Mammary epithelial cell (primary cell): ENCODE measurements at regions of chr10 and their contacts with region 1.

Region 1: DNA sequence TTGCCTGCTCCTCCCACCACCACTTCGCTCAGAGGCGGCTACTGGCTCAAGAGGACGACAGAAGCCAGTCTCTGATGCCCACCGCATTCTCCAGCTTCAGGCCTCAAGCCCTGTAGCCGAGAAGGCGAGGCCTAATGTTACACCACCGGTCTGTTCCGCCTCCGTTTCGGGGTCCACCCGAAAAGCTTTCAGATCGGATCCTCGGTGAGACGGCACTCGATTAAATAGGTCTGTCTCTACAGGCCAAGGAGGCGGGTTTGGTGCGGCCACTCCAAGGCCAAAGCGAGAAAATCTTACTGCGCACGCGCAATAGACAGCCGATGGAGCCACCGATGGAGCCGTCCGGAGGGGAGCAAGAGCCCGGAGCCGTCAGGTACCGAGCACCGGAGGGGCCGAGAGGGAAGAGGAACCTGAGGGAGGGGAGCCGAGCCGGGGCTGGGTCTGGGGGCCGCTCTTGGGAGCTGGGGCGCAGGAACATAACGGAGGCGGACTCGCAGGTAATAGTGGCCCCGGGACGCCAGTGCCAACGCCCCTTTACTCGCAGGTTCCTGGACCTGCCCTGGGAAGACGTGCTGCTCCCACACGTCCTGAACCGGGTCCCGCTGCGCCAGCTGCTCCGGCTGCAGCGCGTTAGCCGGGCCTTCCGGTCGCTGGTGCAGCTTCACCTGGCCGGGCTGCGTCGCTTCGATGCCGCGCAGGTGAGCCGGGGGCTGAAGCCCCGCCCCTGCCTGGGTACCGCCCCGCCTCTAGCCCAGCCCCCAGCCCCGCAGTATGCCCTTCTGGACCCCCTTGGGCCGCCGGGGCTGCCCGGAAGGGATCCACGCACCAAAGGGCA is at the start of gene FBXL15:
- DNase-seq: peak; percentile 96
- H3K4me3 ChIP-seq: peak within 1 kb of the TSS; percentile 72 to 88 (median 74)
- H3K27ac ChIP-seq: peak within 1 kb of the TSS; percentile 56
- H3K4me1 ChIP-seq: peaks cover 38% of the 10 kb centered on the region
- H3K27me3 ChIP-seq: no peaks in the 10 kb centered on the region
- CTCF ChIP-seq: no peak
- total RNA-seq, gene FBXL15: 5.0 to 7.0 TPM

Region 2: GRCh38 chr10:102394079-102394800 is 26.8 kb before region 1 on chr10:
- CTCF ChIA-PET with region 1: interaction called, 4 read pairs
- dilution Hi-C with region 1: no loop called
- in situ Hi-C with region 1: no loop called
- intact Hi-C with region 1: loop called (anchors 1 kb)
- DNase-seq: peak; percentile 98
- H3K4me3 ChIP-seq: peak overlapping the region; percentile 74 to 77 (median 76)
- H3K27ac ChIP-seq: peak overlapping the region; percentile 89
- H3K4me1 ChIP-seq: peaks cover 18% of the 10 kb centered on the region
- H3K27me3 ChIP-seq: no peaks in the 10 kb centered on the region
- CTCF ChIP-seq: no peak

Region 3: GRCh38 chr10:102432162-102432950 is 11.3 kb after region 1 on chr10 and contains the start of gene CUEDC2:
- CTCF ChIA-PET with region 1: no interaction called
- dilution Hi-C with region 1: no loop called
- in situ Hi-C with region 1: no loop called
- intact Hi-C with region 1: loop called (anchors 1 kb)
- DNase-seq: peak; percentile 94
- H3K4me3 ChIP-seq: peak within 1 kb of the TSS; percentile 42 to 97 (median 80)
- H3K27ac ChIP-seq: peak within 1 kb of the TSS; percentile 47
- H3K4me1 ChIP-seq: no peaks in the 10 kb centered on the region
- H3K27me3 ChIP-seq: no peaks in the 10 kb centered on the region
- CTCF ChIP-seq: no peak
- total RNA-seq, gene CUEDC2: 32.0 to 49.5 TPM

Region 4: GRCh38 chr10:102461187-102462054 is 40.4 kb after region 1 on chr10:
- CTCF ChIA-PET with region 1: no interaction called
- dilution Hi-C with region 1: no loop called
- in situ Hi-C with region 1: no loop called
- intact Hi-C with region 1: loop called (anchors 5 kb)
- DNase-seq: peak; percentile 88
- H3K4me3 ChIP-seq: peak overlapping the region; percentile 43 to 56 (median 54)
- H3K27ac ChIP-seq: peak overlapping the region; percentile 9
- H3K4me1 ChIP-seq: peaks cover 11% of the 10 kb centered on the region
- H3K27me3 ChIP-seq: no peaks in the 10 kb centered on the region
- CTCF ChIP-seq: no peak

Region 5: DNA sequence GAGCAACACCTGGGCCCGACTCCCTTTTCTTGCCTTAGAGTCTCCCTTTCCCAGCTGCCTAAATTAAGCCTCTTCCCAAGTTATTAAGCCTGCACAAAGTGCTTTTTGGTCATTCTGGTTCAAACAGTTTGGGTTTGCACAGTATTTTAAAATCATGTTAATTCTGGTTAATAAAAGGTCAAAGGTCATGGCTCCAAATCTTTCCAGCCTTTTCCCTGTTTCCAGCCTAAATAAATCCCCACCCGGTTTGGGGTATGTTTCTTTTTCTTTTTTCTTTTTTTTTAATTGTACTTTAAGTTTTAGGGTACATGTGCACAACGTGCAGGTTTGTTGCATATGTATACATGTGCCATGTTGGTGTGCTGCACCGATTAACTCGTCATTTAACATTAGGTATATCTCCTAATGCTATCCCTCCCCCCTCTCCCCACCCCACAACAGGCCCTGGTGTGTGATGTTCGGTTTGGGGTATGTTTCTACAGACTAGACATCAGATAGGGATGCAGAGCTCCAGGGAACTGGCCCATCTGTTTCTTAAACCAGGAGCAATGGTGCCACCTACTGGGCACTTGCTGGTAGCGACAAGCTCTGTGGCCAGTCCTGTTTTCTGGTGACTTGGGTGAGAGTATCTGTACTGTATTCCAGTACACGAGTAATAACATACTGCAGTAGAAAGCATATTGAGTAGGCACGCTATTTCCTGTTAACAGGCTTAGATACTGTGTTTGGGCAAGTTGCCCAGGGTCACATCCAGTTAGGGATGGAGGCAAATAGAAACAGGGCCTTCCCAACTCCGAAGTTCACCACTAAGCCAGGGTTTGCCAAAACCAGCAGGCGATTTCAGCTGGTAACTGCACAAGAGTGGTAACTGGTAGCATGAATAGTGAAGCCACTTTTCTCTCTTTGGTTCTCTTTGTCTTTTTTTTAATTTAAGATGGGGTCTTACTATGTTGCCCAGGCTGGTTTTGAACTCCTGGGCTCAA is 162.7 kb after region 1 on chr10:
- CTCF ChIA-PET with region 1: interaction called, 3 read pairs
- dilution Hi-C with region 1: no loop called
- in situ Hi-C with region 1: no loop called
- intact Hi-C with region 1: loop called (anchors 1 kb)
- DNase-seq: peak; percentile 66
- H3K4me3 ChIP-seq: no peak overlapping the region
- H3K27ac ChIP-seq: no peak overlapping the region
- H3K4me1 ChIP-seq: no peaks in the 10 kb centered on the region
- H3K27me3 ChIP-seq: no peaks in the 10 kb centered on the region
- CTCF ChIP-seq: peak; percentile 89 to 91